ENCODE measurements at regions of chr6 and their contacts with region 1.

Region 1: DNA sequence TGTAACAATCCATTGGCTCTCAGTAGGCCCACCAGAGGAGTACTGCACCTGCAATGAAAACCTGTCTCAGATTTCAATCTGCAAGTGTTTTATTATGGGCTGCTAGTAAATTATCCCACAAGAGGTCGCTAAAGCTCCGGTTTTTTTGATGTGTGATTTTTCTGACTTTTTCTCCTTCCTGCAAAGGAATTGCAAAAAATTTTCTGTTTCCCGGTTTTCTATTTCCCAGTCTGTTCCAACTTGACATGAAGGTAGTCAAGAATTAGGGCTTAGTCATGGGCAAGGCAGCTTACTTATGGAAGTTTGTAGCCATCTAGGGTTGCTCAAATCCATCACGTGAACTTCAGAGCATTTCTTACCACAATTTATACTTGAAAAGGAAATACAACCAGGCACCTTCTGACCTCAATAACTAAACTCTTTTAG is 38.5 kb upstream of the AHI1 start:
- DNase-seq: peak; percentile 15
- H3K4me3 Mint-ChIP-seq: peak overlapping the region; percentile 55
- H3K27ac Mint-ChIP-seq: peak overlapping the region; percentile 77
- H3K4me1 Mint-ChIP-seq: peaks cover 53% of the 10 kb centered on the region
- H3K27me3 Mint-ChIP-seq: no peaks in the 10 kb centered on the region

Region 2: DNA sequence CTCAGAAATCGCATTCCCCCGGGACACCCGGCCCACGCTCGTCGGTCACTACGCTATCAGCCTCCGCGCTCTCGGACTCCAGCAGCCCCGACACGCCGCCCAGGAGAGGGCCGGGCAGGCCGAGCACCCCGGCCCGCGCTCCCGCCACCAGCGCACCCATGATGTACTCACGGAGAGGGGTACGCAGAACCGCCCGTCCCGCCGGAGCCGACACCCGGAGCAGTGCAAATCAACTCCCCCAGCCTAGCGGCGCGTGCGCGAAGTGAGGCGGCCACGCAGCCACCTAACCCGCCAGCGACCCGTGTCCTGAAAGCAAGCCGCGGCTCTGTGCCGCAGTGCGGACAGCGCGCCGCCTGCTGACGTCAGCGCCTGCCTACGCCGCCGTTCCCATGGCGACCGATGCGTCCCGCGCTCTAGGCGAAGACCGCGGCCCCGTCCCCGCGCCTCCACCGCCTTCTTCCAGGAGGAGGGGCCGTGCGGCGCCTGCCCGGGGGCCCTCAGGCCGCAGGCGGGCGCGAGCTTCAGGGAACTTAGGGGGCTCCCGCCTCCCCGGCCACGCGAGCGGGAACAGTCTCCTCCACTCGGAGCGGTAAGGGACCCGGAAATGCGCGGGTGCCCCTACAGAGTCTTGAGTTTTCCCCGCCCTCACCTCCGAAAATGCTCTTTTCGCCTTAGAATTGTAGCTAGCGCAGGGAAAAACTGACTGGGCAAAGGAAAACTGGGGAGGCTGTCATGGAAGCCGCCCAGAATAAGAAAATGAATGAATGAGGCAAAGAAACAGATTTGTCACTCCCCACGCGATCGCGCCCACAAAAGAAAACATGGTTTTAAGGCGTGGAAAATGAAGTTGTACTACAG is 38.4 kb before region 1 on chr6 and contains the start of gene AHI1:
- intact Hi-C with region 1: loop called (anchors 1 kb)
- DNase-seq: peak; percentile 85
- H3K4me3 Mint-ChIP-seq: no peak within 1 kb of the TSS
- H3K27ac Mint-ChIP-seq: no peak within 1 kb of the TSS
- H3K4me1 Mint-ChIP-seq: peaks cover 20% of the 10 kb centered on the region
- H3K27me3 Mint-ChIP-seq: no peaks in the 10 kb centered on the region
- total RNA-seq, gene AHI1: 142 and 146 TPM in 2 replicates

Region 3: GRCh38 chr6:135577059-135577538 is 41.1 kb after region 1 on chr6:
- intact Hi-C with region 1: loop called (anchors 1 kb)
- DNase-seq: no peak
- H3K4me3 Mint-ChIP-seq: peak overlapping the region; percentile 49
- H3K27ac Mint-ChIP-seq: peak overlapping the region; percentile 97
- H3K4me1 Mint-ChIP-seq: peaks cover 48% of the 10 kb centered on the region
- H3K27me3 Mint-ChIP-seq: no peaks in the 10 kb centered on the region

Region 4: DNA sequence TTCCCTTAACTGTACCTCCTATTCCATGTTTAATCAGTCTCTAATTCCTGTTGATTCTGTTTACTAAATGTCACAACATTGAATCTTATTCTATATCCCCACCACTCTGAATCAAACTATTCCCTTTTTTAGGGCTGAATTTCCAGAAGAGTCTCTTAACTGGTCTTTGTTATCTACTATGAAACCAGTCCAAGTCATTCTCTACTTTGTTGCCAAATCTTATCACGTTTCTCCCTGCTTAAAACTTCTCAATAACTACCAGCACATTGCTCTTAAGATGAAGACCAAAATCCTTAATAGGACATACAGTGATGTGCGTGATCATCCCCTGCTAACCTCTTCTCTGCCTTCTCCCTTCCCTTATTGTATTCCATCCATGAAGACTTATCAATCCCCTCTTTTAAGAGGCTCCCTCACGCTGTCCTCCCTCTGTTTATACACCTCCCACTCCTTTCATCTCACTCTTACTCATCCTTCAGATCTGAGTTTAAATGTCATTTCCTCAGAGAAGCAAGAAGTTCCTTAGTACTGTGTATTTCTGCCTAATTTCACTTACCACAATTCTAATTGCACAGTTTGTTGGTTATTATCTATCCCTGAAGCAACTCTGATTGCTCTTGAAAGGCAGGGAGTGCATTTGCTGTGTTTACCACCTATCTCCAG is 104.6 kb after region 1 on chr6:
- intact Hi-C with region 1: loop called (anchors 1 kb)
- DNase-seq: no peak
- H3K4me3 Mint-ChIP-seq: peak overlapping the region; percentile 38
- H3K27ac Mint-ChIP-seq: peak overlapping the region; percentile 91
- H3K4me1 Mint-ChIP-seq: peaks cover 68% of the 10 kb centered on the region
- H3K27me3 Mint-ChIP-seq: peaks cover 2% of the 10 kb centered on the region

Region 5: DNA sequence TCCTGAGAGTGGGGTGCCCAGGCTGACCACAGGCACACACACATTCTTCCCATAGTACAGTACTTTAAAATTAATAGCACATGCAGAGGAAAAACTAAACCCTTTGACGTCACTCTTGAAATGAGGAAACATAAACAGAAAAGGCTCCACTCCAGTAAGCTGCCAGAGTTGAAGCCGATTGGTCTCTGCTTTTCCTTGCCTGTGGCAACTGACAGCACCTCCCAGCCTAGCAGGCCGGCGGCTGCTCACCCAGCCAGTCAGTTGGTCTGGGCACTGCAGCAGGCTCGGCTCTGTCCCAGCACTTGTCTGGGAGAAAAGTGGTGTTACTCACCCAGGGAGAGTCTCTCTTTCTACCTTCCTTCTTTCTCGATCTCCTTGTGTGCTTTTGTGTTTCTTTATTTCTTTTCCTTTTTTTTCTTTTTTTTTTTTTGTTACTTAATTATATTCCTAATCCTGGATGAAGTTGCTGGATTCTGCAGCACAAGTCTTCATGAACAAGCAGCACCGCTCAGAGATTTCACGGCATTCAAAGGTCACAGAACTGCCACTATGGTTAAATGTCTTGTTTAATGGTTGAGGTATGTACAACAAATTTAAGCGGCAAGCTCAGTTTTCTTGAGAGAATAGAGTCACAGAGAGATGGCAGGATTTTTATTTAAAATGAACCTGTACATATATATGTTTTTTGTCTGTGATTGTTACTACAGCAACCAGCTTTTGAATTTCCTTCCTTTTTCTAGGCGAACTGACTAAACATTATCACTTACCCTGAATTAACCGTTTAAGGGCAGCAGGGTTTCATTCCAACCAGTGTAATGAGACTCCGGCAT is 315.7 kb after region 1 on chr6 and contains the start of gene PDE7B:
- intact Hi-C with region 1: loop called (anchors 1 kb)
- DNase-seq: peak; percentile 52
- H3K4me3 Mint-ChIP-seq: peak within 1 kb of the TSS; percentile 88
- H3K27ac Mint-ChIP-seq: peak within 1 kb of the TSS; percentile 88
- H3K4me1 Mint-ChIP-seq: peaks cover 47% of the 10 kb centered on the region
- H3K27me3 Mint-ChIP-seq: peaks cover 5% of the 10 kb centered on the region
- total RNA-seq, gene PDE7B: 10.7 and 11.1 TPM in 2 replicates

Region 6: DNA sequence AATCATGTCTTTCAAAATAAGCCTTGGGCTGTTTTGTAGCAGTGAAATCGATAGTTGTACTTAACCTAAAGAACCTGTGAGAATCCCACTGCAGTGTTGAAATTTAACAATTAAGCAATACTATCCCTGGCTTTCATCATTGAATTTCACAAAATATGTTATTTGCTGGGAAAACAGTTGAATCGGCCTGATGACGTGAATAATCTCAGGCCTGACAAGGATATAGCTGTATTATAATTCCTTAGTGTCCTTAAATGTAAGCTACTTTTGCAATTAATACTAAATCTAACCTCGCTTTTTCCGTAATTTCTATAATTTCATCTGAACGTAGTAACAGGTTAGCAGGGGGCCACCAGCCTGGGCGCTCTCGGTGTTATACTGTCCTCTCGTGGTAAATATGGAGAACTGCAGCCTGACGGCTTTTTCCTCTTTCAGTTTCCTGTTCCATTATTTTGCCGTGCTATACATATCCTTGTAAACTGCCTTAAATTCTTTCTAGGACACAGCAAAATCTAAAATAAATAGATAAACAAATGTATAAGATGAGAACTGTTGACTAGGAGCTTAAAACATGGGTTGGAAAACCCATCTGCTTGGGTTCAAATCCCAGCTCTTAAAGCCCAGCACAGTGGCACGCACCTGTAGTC is 690.1 kb after region 1 on chr6:
- intact Hi-C with region 1: loop called (anchors 1 kb)
- DNase-seq: peak; percentile 35
- H3K4me3 Mint-ChIP-seq: peak overlapping the region; percentile 0
- H3K27ac Mint-ChIP-seq: peak overlapping the region; percentile 25
- H3K4me1 Mint-ChIP-seq: peaks cover 27% of the 10 kb centered on the region
- H3K27me3 Mint-ChIP-seq: no peaks in the 10 kb centered on the region